Endothelial cell of umbilical vein (primary cell): ENCODE measurements at regions of chr1 and their contacts with region 1.

Region 1: GRCh38 chr1:205998457-205999241 is 4.5 kb downstream of the RAB7B start:
- DNase-seq: no peak
- H3K4me3 ChIP-seq: no peak overlapping the region
- H3K27ac ChIP-seq: no peak overlapping the region
- H3K4me1 ChIP-seq: peaks cover 2% of the 10 kb centered on the region
- H3K27me3 ChIP-seq: no peaks in the 10 kb centered on the region
- CTCF ChIP-seq: no peak
- POLR2A ChIP-seq: no peak

Region 2: DNA sequence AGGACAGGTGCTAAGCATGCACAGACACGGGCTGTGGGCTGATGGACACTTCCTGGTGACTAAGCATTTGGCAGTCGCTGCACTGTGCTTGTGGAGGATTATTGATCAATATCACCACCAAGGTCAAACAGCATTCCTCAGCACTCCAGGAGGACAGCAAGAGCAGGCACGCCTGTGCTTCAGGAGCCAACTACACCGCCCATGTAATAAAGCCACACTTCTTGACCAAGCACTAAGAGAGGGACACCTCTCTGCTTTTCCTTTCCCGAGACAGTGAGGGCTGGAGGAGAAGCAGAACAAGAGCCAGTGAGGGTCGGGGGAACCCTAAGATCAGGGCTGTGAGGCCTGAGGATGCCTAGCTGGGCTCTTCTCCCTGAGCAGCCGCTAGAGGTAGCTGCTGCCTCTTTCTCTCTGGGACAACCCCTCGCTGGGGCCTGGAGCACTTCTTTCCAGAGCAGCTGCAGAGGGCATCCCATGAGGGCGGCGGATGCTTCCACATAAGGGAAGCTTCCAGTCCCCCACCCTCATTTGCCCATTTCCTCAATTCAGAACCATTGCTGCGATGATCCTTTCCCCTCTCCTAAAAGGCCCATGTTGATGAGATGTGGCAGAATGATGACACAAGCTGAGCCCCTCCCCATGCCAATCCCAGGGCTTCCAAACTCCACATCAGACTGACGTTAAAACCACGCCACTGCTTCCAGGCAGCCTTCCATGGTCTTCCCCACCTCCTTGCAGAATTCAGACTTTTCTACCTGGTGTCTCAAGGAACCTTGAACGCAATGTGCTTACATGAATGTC is 14.5 kb before region 1 on chr1:
- CTCF ChIA-PET with region 1: interaction called, 27 read pairs
- POLR2A ChIA-PET with region 1: no interaction called
- dilution Hi-C with region 1: no loop called
- intact Hi-C with region 1: no loop called
- DNase-seq: peak; percentile 57
- H3K4me3 ChIP-seq: no peak overlapping the region
- H3K27ac ChIP-seq: no peak overlapping the region
- H3K4me1 ChIP-seq: peaks cover 30% of the 10 kb centered on the region
- H3K27me3 ChIP-seq: no peaks in the 10 kb centered on the region
- CTCF ChIP-seq: peak; percentile 84 to 96
- POLR2A ChIP-seq: no peak